ENCODE measurements at regions of chr16 and their contacts with region 1.

Region 1: GRCh38 chr16:2155091-2156021 is at the start of gene TRAF7:
- DNase-seq: peak; percentile 100
- ATAC-seq: peak; percentile 88
- H3K4me3 ChIP-seq: peak within 1 kb of the TSS; percentile 99
- H3K27ac ChIP-seq: peak within 1 kb of the TSS; percentile 94
- H3K4me1 ChIP-seq: peaks cover 45% of the 10 kb centered on the region
- H3K27me3 ChIP-seq: no peaks in the 10 kb centered on the region
- CTCF ChIP-seq: no peak
- EP300 ChIP-seq: 0 out of 4 replicates have a peak, but pooled peaks of 1 of the 2 experiments have one; percentile 10
- POLR2A ChIP-seq: peak; percentile 100
- RAD21 ChIP-seq: no peak
- polyA plus RNA-seq, gene TRAF7: 0.61 to 2.1 TPM

Region 2: GRCh38 chr16:2003827-2004641 is 151.3 kb before region 1 on chr16:
- CTCF ChIA-PET with region 1: interaction called, 11 read pairs
- POLR2A ChIA-PET with region 1: interaction called, 14 read pairs
- RAD21 ChIA-PET with region 1: interaction called, 3 read pairs
- SMC1A ChIA-PET with region 1: interaction called, 4 read pairs
- in situ Hi-C with region 1: no loop called
- intact Hi-C with region 1: loop called (anchors 5 kb)
- DNase-seq: no peak
- ATAC-seq: peak; percentile 97
- H3K4me3 ChIP-seq: no peak overlapping the region
- H3K27ac ChIP-seq: no peak overlapping the region
- H3K4me1 ChIP-seq: peaks cover 15% of the 10 kb centered on the region
- H3K27me3 ChIP-seq: no peaks in the 10 kb centered on the region
- CTCF ChIP-seq: peak; percentile 96 to 99 (median 99); a peak in 5 of 6 replicates
- EP300 ChIP-seq: no peak
- POLR2A ChIP-seq: peak; percentile 16
- RAD21 ChIP-seq: peak; percentile 43

Region 3: DNA sequence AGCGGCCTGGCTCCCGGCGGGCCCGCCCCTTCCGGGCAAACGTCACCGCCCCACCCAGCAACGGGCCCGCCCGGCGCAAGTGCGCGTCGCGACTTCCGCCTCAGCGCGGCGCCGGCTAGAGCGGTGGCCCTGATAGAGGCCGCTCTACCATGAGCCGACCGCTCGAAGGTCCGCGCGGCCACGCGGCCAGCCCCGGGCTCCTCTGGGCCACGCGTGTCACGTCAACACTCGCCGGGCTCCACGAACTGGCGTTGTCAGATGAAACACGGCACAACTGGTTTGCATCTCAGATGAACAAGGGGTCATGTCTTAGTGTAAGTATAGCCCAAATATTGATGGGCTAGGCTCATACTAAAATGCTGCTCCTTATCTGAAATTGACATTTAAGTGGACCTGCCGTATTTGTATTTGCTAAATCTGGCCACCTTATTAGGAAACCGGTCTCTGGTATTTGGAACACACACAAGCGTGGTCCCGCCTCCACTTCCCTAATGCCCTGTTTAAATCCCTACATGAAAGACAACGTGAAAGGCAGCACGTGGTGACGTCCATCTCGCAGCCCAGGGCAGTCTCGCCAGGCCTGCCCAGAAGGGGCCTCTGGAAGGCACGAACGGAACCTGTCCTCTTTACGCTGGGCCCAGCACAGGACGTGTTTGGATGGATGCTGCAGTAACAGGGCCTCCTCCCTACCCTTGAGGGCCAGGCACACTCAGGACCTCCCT is 145.4 kb before region 1 on chr16 and contains the start of gene ZNF598:
- CTCF ChIA-PET with region 1: interaction called, 5 read pairs
- POLR2A ChIA-PET with region 1: interaction called, 14 read pairs
- RAD21 ChIA-PET with region 1: no interaction called
- SMC1A ChIA-PET with region 1: interaction called, 3 read pairs
- in situ Hi-C with region 1: no loop called
- intact Hi-C with region 1: loop called (anchors 5 kb)
- DNase-seq: no peak
- ATAC-seq: peak; percentile 93
- H3K4me3 ChIP-seq: peak within 1 kb of the TSS; percentile 100
- H3K27ac ChIP-seq: peak within 1 kb of the TSS; percentile 89
- H3K4me1 ChIP-seq: peaks cover 15% of the 10 kb centered on the region
- H3K27me3 ChIP-seq: no peaks in the 10 kb centered on the region
- CTCF ChIP-seq: no peak
- EP300 ChIP-seq: no peak
- POLR2A ChIP-seq: peak; percentile 94
- RAD21 ChIP-seq: no peak
- polyA plus RNA-seq, gene ZNF598: 0.08 to 0.84 TPM

Region 4: DNA sequence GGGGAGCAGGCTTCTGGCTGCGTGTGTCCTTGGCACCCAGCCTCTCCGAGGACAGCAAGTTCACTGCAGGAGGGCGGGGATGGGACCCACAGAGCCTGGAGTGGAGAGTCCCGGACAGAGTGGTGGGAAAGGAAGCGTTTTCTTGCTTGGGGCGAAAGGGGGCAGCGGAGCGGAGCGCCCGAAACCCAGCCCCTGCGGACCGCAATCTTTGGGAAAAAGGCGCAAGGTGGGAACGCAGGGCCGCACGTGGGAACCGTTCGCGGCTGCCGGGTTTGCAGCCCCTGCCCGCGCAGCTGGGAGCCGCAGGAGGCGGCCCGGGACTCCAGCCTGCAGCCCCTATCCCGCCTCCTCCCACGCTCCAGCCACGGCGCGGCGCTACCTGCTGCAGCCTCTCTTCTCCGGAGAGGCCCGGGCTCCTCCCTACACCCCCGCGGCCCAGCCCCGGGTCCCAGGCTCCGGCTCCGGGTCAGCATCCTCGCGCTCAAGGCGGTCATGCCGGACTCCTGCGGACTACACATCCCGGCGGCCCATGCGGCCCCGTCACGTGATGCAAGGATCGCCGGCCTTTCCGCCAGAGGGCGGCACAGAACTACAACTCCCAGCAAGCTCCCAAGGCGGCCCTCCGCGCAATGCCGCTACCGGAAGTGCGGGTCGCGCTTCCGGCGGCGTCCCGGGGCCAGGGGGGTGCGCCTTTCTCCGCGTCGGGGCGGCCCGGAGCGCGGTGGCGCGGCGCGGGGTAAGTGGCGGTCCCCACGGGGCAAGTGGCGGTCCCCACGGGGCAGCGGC is 107.8 kb before region 1 on chr16 and contains the starts of genes NTHL1 and TSC2:
- CTCF ChIA-PET with region 1: interaction called, 3 read pairs
- POLR2A ChIA-PET with region 1: interaction called, 13 read pairs
- RAD21 ChIA-PET with region 1: interaction called, 4 read pairs
- SMC1A ChIA-PET with region 1: no interaction called
- in situ Hi-C with region 1: no loop called
- intact Hi-C with region 1: no loop called
- DNase-seq: peak; percentile 82
- ATAC-seq: peak; percentile 98
- H3K4me3 ChIP-seq: peak within 1 kb of the TSS; percentile 97
- H3K27ac ChIP-seq: peak within 1 kb of the TSS; percentile 48
- H3K4me1 ChIP-seq: peaks cover 22% of the 10 kb centered on the region
- H3K27me3 ChIP-seq: no peaks in the 10 kb centered on the region
- CTCF ChIP-seq: peak in 2 of 3 experiments; percentile 22 to 29; a peak in 3 of 6 replicates
- EP300 ChIP-seq: no peak
- POLR2A ChIP-seq: peak; percentile 83
- RAD21 ChIP-seq: no peak
- polyA plus RNA-seq, gene NTHL1: 0.85 to 9.2 TPM
- polyA plus RNA-seq, gene TSC2: 1.6 to 3.9 TPM

Region 5: GRCh38 chr16:2115591-2115973 is 39.8 kb before region 1 on chr16:
- CTCF ChIA-PET with region 1: no interaction called
- POLR2A ChIA-PET with region 1: no interaction called
- RAD21 ChIA-PET with region 1: no interaction called
- SMC1A ChIA-PET with region 1: no interaction called
- in situ Hi-C with region 1: no loop called
- intact Hi-C with region 1: no loop called
- DNase-seq: no peak
- ATAC-seq: no peak
- H3K4me3 ChIP-seq: no peak overlapping the region
- H3K27ac ChIP-seq: no peak overlapping the region
- H3K4me1 ChIP-seq: no peaks in the 10 kb centered on the region
- H3K27me3 ChIP-seq: no peaks in the 10 kb centered on the region
- CTCF ChIP-seq: no peak
- EP300 ChIP-seq: no peak
- POLR2A ChIP-seq: no peak
- RAD21 ChIP-seq: no peak

Region 6: DNA sequence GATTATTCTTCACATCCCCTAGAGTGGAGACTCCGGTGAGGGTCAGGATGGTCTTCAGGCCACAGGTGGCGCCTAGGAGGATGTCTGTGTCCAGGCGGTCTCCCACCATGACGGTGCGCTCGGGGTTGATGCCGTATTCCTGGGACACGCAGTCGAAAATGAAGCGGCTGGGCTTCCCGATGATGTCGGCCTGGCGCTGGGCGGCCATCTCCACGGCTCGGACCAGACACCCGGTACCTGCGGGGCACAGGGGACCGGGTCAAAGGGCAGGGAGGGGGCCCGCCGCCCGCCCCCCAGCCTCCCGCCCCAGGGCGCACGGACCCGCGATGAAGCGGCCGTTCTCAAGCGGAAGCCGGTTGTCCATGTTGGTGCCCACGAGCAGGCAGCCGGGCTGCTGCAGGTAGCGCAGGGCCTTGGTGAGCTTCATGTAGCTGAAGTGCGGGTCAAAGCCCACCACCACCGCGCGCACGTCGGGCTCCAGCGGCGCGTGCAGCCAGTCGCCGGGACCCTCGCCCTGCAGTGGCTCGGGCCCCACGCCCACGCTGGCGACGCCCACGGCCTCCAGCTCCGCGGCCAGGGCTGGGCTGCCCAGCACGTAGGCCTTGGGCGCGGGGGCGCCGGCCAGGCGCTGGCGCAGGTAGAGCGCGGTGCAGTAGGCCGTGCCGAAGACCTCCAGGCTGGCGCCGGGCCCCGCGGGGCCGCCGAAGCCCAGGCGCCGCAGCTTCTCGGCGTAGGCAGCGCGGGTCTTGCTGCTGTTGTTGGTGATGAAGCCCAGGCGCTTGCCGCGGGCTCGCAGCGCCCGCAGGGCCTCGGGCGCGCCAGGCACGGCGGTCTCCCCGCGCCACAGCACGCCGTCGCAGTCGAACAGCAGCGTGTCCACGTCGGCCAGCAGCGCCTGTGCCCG is 58.7 kb after region 1 on chr16:
- CTCF ChIA-PET with region 1: no interaction called
- POLR2A ChIA-PET with region 1: interaction called, 11 read pairs
- RAD21 ChIA-PET with region 1: interaction called, 5 read pairs
- SMC1A ChIA-PET with region 1: interaction called, 4 read pairs
- in situ Hi-C with region 1: no loop called
- intact Hi-C with region 1: no loop called
- DNase-seq: no peak
- ATAC-seq: no peak
- H3K4me3 ChIP-seq: peak overlapping the region; percentile 80
- H3K27ac ChIP-seq: peak overlapping the region; percentile 65
- H3K4me1 ChIP-seq: no peaks in the 10 kb centered on the region
- H3K27me3 ChIP-seq: no peaks in the 10 kb centered on the region
- CTCF ChIP-seq: no peak
- EP300 ChIP-seq: no peak
- POLR2A ChIP-seq: peak; percentile 68
- RAD21 ChIP-seq: no peak

Region 7: GRCh38 chr16:2260250-2260649 is 104.9 kb after region 1 on chr16:
- CTCF ChIA-PET with region 1: no interaction called
- POLR2A ChIA-PET with region 1: no interaction called
- RAD21 ChIA-PET with region 1: no interaction called
- SMC1A ChIA-PET with region 1: no interaction called
- in situ Hi-C with region 1: no loop called
- intact Hi-C with region 1: loop called (anchors 5 kb)
- DNase-seq: no peak
- ATAC-seq: no peak
- H3K4me3 ChIP-seq: no peak overlapping the region
- H3K27ac ChIP-seq: no peak overlapping the region
- H3K4me1 ChIP-seq: no peaks in the 10 kb centered on the region
- H3K27me3 ChIP-seq: no peaks in the 10 kb centered on the region
- CTCF ChIP-seq: no peak
- EP300 ChIP-seq: no peak
- POLR2A ChIP-seq: no peak
- RAD21 ChIP-seq: no peak

Measured in GM12878 (cell line).